ENCODE measurements at regions of chr7 and their contacts with region 1.

Region 1: GRCh38 chr7:88169717-88170320 is 50.0 kb downstream of the SRI start:
- DNase-seq: no peak
- ATAC-seq: peak; percentile 59
- H3K4me3 ChIP-seq: no peak overlapping the region
- H3K27ac ChIP-seq: no peak overlapping the region
- H3K4me1 ChIP-seq: no peaks in the 10 kb centered on the region
- H3K27me3 ChIP-seq: no peaks in the 10 kb centered on the region
- CTCF ChIP-seq: peak; percentile 37 to 58 (median 43); a peak in 5 of 6 replicates
- EP300 ChIP-seq: no peak
- POLR2A ChIP-seq: no peak
- RAD21 ChIP-seq: peak; percentile 55

Region 2: GRCh38 chr7:87648316-87648715 is 521.5 kb before region 1 on chr7:
- CTCF ChIA-PET with region 1: no interaction called
- POLR2A ChIA-PET with region 1: no interaction called
- RAD21 ChIA-PET with region 1: no interaction called
- SMC1A ChIA-PET with region 1: no interaction called
- in situ Hi-C with region 1: no loop called
- intact Hi-C with region 1: no loop called
- DNase-seq: no peak
- ATAC-seq: no peak
- H3K4me3 ChIP-seq: no peak overlapping the region
- H3K27ac ChIP-seq: no peak overlapping the region
- H3K4me1 ChIP-seq: no peaks in the 10 kb centered on the region
- H3K27me3 ChIP-seq: no peaks in the 10 kb centered on the region; a peak in 1 of 4 replicates
- CTCF ChIP-seq: no peak
- EP300 ChIP-seq: no peak
- POLR2A ChIP-seq: no peak
- RAD21 ChIP-seq: no peak

Region 3: GRCh38 chr7:87797798-87798403 is 371.9 kb before region 1 on chr7:
- CTCF ChIA-PET with region 1: interaction called, 31 read pairs
- POLR2A ChIA-PET with region 1: no interaction called
- RAD21 ChIA-PET with region 1: interaction called, 15 read pairs
- SMC1A ChIA-PET with region 1: interaction called, 12 read pairs
- in situ Hi-C with region 1: no loop called
- intact Hi-C with region 1: loop called (anchors 2 kb)
- DNase-seq: peak; percentile 45
- ATAC-seq: peak; percentile 96
- H3K4me3 ChIP-seq: no peak overlapping the region
- H3K27ac ChIP-seq: no peak overlapping the region
- H3K4me1 ChIP-seq: no peaks in the 10 kb centered on the region
- H3K27me3 ChIP-seq: no peaks in the 10 kb centered on the region
- CTCF ChIP-seq: peak; percentile 56 to 81 (median 59); a peak in 4 of 6 replicates
- EP300 ChIP-seq: no peak
- POLR2A ChIP-seq: no peak
- RAD21 ChIP-seq: peak; percentile 89

Region 4: GRCh38 chr7:87895363-87895762 is 274.5 kb before region 1 on chr7:
- CTCF ChIA-PET with region 1: interaction called, 10 read pairs
- POLR2A ChIA-PET with region 1: no interaction called
- RAD21 ChIA-PET with region 1: no interaction called
- SMC1A ChIA-PET with region 1: interaction called, 3 read pairs
- in situ Hi-C with region 1: no loop called
- intact Hi-C with region 1: no loop called
- DNase-seq: no peak
- ATAC-seq: no peak
- H3K4me3 ChIP-seq: no peak overlapping the region
- H3K27ac ChIP-seq: no peak overlapping the region
- H3K4me1 ChIP-seq: no peaks in the 10 kb centered on the region
- H3K27me3 ChIP-seq: no peaks in the 10 kb centered on the region
- CTCF ChIP-seq: no peak
- EP300 ChIP-seq: no peak
- POLR2A ChIP-seq: no peak
- RAD21 ChIP-seq: no peak

Region 5: DNA sequence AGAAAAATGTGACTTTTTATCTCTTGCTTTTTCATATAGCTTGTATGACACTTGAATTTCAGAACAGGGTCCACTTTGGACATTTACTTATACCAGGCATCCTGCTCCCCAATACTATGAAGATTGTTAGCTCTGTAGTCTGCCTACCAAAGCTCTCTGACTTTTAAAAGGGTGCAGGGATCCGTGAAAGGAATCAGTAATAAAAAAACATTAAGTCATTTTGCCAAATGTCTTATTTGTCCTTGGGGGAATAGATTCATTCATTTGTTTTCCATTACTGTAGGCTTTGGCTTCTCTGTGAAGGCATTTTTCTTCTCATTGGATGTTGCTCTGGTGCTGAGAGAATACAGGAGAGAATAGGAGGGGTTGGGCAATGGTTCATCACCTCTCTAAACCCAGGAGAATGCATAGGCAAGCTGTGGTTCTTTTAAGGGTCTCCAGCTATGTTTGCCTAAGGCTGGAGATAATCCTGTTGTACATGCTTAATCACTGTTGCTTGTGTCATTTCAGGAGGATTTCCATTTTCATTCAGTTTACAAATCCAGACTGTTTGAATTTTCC is 53.5 kb before region 1 on chr7:
- CTCF ChIA-PET with region 1: interaction called, 11 read pairs
- POLR2A ChIA-PET with region 1: no interaction called
- RAD21 ChIA-PET with region 1: interaction called, 14 read pairs
- SMC1A ChIA-PET with region 1: interaction called, 17 read pairs
- in situ Hi-C with region 1: no loop called
- intact Hi-C with region 1: loop called (anchors 5 kb)
- DNase-seq: no peak
- ATAC-seq: no peak
- H3K4me3 ChIP-seq: no peak overlapping the region
- H3K27ac ChIP-seq: no peak overlapping the region
- H3K4me1 ChIP-seq: no peaks in the 10 kb centered on the region
- H3K27me3 ChIP-seq: no peaks in the 10 kb centered on the region
- CTCF ChIP-seq: no peak
- EP300 ChIP-seq: no peak
- POLR2A ChIP-seq: no peak
- RAD21 ChIP-seq: no peak

Region 6: DNA sequence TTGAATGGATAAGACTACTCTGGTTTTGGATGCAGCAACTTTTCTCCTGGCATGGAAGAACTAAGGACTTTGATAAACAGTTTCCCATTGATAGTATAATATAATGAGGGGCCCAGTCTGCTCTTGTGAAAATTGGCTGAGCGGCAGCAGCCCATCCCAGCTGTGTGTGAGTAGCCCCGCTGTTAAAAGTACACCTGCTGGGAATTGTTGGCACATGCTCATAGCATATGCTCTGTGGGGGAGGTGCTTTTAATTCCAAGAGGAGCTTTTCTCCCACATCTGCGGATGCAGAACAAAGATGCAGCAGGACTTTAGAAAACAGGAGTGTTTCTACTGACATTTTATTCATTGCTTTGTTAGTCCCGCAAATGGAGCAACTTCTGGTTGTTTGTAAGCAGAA is 31.0 kb after region 1 on chr7:
- CTCF ChIA-PET with region 1: interaction called, 10 read pairs
- POLR2A ChIA-PET with region 1: no interaction called
- RAD21 ChIA-PET with region 1: no interaction called
- SMC1A ChIA-PET with region 1: interaction called, 4 read pairs
- in situ Hi-C with region 1: no loop called
- intact Hi-C with region 1: no loop called
- DNase-seq: no peak
- ATAC-seq: no peak
- H3K4me3 ChIP-seq: no peak overlapping the region
- H3K27ac ChIP-seq: no peak overlapping the region
- H3K4me1 ChIP-seq: peaks cover 3% of the 10 kb centered on the region; the same call in 1 of the 2 replicates
- H3K27me3 ChIP-seq: no peaks in the 10 kb centered on the region
- CTCF ChIP-seq: no peak
- EP300 ChIP-seq: no peak
- POLR2A ChIP-seq: no peak
- RAD21 ChIP-seq: no peak